WTC11 (cell line): ENCODE measurements at regions of chr12 and their contacts with region 1.

Region 1: GRCh38 chr12:85920324-85920947 is 46.3 kb downstream of the NTS start:
- DNase-seq: no peak
- ATAC-seq: no peak
- H3K4me3 Mint-ChIP-seq: no peak overlapping the region
- H3K27ac Mint-ChIP-seq: no peak overlapping the region
- H3K4me1 Mint-ChIP-seq: peaks cover 18% of the 10 kb centered on the region
- H3K27me3 Mint-ChIP-seq: no peaks in the 10 kb centered on the region
- CTCF ChIP-seq: peak; percentile 55

Region 2: GRCh38 chr12:85951823-85952222 is 31.4 kb after region 1 on chr12:
- CTCF ChIA-PET with region 1: interaction called, 28 read pairs
- POLR2A ChIA-PET with region 1: no interaction called
- DNase-seq: no peak
- ATAC-seq: no peak
- H3K4me3 Mint-ChIP-seq: no peak overlapping the region
- H3K27ac Mint-ChIP-seq: no peak overlapping the region
- H3K4me1 Mint-ChIP-seq: peaks cover 72% of the 10 kb centered on the region
- H3K27me3 Mint-ChIP-seq: no peaks in the 10 kb centered on the region
- CTCF ChIP-seq: peak; percentile 44; the same call in 1 of the 2 replicates